ENCODE measurements at regions of chr17 and their contacts with region 1.

Region 1: GRCh38 chr17:4304417-4305027 is 40.7 kb upstream of the ANKFY1 start:
- H3K4me3 ChIP-seq: no peak overlapping the region
- H3K27ac ChIP-seq: no peak overlapping the region
- H3K4me1 ChIP-seq: peaks cover 5% of the 10 kb centered on the region; the same call in 1 of the 2 replicates
- CTCF ChIP-seq: 0 out of 2 replicates have a peak, but pooled peaks have one; percentile 16

Region 2: DNA sequence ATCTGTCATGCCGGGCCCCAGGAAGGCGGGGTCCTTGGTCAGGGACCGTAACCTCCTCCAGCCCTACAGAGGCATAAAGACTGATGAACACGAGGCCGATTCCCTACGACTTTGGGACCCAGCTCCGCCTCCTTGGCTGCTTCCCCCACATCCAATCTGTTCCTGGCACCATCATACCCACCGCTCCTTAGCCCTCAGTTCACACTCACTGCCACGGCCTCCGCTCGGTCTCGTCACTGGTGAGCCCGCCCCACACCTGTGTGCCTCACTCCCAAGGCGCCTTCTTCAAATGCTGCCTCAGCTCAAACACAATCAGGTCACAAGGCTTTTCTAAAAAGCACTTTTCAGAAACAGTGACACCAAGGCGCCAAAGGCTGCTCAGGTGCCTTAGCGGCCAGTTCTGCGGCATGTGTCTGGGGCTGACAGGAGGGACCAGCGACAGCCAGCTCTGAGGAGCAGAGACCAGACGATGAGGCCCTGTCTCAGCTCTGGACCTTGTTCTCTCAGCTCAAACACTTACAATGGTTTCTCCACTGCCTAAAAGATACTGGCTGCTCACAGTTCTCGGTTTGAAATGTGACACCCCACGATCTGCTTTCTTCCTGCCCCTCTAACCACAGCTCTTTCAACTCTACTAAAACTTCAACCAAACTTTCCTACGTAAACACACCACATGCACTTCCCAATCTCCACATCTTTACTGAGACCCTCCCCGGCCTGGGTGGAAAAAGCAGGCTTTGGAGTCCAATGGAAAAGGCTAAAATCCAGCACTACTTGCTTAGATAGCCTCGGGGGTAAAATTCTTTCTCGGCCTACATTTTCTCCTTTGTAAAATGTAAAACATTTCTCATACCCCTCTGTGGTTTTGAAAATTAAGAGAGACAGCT is 128.4 kb before region 1 on chr17:
- CTCF ChIA-PET with region 1: no interaction called
- POLR2A ChIA-PET with region 1: no interaction called
- H3K4me3 ChIP-seq: no peak overlapping the region
- H3K27ac ChIP-seq: peak overlapping the region; percentile 11; the same call in 1 of the 2 replicates
- H3K4me1 ChIP-seq: no peaks in the 10 kb centered on the region
- CTCF ChIP-seq: no peak

Region 3: DNA sequence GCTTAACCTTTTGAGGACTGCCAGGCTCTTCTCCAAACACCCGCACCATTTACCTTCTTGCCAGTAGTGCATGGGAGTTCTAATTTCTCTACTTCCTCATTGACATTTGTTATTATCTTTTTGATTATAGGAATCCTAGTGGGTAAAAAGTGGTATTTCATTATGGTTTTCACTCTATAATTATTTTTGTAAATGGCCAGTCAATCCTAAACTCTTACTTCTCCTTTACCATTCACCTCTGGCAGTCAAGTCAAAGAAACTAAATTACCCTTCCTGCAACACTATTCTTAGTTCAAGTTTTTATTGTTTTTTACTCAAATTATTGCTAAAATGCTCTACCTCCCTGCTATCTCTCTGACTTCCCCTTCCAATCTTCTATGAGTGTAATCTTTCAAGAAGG is 10.9 kb before region 1 on chr17:
- CTCF ChIA-PET with region 1: interaction called, 12 read pairs
- POLR2A ChIA-PET with region 1: no interaction called
- H3K4me3 ChIP-seq: no peak overlapping the region
- H3K27ac ChIP-seq: no peak overlapping the region
- H3K4me1 ChIP-seq: peaks cover 17% of the 10 kb centered on the region
- CTCF ChIP-seq: no peak

Region 4: GRCh38 chr17:4318186-4318585 is 13.7 kb after region 1 on chr17:
- CTCF ChIA-PET with region 1: interaction called, 11 read pairs
- POLR2A ChIA-PET with region 1: no interaction called
- H3K4me3 ChIP-seq: no peak overlapping the region
- H3K27ac ChIP-seq: no peak overlapping the region
- H3K4me1 ChIP-seq: peaks cover 32% of the 10 kb centered on the region
- CTCF ChIP-seq: no peak

Region 5: GRCh38 chr17:4498461-4499397 is 194.2 kb after region 1 on chr17 and contains the start of gene SPNS2:
- CTCF ChIA-PET with region 1: no interaction called
- POLR2A ChIA-PET with region 1: no interaction called
- H3K4me3 ChIP-seq: peak within 1 kb of the TSS; percentile 12
- H3K27ac ChIP-seq: no peak within 1 kb of the TSS
- H3K4me1 ChIP-seq: no peaks in the 10 kb centered on the region
- CTCF ChIP-seq: no peak